Left cardiac atrium (tissue), 4 donors: ENCODE measurements at regions of chr3 and their contacts with region 1.

Region 1: GRCh38 chr3:155323063-155323666 is 29.7 kb upstream of the STRIT1 start:
- DNase-seq: no peak
- ATAC-seq: peak; percentile 73 to 74

Region 2: DNA sequence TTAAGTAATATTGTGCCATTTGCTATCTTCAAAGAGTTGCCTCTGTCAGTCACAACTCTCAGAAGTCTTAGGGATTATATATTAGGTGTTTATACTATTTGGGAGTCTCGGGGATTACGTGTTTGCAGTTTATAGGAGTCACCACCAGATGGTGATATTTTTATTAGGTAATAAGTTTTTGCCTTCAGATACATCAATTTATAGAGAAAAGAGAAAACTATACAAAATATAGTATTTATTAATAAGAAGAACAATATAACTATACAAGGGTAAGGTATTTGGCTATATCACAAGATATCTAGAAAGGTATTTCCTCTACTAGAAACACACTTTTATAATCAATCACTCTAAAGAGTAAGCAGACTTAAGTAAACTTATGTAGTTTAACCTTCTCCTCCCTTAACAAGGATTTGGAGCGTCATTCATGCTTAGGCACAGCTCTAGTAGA is 988.2 kb before region 1 on chr3:
- intact Hi-C with region 1: loop called (anchors 5 to 10 kb)
- DNase-seq: no peak
- ATAC-seq: no peak

Region 3: DNA sequence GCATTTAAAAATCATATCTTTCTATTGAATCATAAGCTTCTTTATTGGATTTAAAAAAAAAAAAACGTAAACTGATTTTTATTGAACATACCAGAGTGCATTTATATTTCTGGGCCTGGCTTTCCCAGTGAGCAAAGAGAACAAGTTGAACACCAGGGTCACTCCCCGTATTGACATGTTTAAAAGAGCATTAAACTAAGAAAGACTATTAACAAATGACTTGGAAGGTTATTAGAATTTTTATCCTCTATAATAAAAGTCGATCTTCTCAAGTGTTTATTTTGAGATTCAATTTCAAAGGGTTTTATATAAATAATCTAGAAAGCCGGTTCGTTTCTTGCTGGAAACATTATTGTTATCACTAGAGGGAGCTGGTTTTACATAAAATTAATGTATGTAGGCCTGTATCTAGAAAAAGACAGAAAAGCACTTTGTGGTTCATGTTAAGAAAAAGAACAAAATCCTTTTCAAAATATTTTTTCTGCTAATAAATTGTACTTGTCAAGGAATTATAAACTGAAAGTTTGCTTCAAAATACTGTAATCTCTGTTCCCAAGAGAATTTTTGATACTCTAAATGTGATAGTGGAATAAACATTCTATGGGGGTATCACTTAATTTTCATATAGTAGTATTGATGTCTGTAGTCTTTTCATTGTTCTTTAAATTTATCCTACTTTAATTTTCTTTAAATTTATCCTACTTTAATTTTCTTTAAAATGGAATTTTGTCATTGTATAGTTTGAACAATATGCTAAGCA is 564.9 kb before region 1 on chr3:
- intact Hi-C with region 1: loop called in 1 of 2 experiments (anchors 5 kb)
- DNase-seq: no peak
- ATAC-seq: no peak

Region 4: GRCh38 chr3:154766765-154767503 is 556.2 kb before region 1 on chr3:
- intact Hi-C with region 1: loop called in 1 of 2 experiments (anchors 5 kb)
- DNase-seq: no peak
- ATAC-seq: no peak

Region 5: DNA sequence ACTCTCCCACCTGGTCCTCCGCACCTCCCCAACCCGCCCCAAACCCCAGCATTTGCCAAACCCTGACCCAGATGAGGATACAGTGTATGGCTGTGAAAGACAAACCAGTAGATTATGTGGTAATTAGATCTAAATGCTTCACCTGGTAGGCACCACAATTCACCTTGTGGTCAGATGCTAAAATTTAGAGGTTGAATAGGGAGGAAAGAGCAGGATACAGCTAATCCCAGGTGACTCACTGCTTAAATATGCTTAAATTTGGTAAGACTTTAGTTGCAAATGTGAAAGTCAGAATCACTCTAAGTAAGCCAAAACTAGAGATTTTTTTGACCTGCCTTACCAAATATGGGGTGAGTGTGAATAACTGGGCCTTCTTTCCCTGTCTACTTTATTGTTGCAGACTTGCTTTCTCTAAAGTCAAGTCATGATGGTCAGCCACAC is 137.5 kb before region 1 on chr3:
- intact Hi-C with region 1: no loop called
- DNase-seq: no peak
- ATAC-seq: peak in 1 of 2 donors; percentile 62